Aorta (tissue), 5 donors: ENCODE measurements at regions of chr6 and their contacts with region 1.

Region 1: DNA sequence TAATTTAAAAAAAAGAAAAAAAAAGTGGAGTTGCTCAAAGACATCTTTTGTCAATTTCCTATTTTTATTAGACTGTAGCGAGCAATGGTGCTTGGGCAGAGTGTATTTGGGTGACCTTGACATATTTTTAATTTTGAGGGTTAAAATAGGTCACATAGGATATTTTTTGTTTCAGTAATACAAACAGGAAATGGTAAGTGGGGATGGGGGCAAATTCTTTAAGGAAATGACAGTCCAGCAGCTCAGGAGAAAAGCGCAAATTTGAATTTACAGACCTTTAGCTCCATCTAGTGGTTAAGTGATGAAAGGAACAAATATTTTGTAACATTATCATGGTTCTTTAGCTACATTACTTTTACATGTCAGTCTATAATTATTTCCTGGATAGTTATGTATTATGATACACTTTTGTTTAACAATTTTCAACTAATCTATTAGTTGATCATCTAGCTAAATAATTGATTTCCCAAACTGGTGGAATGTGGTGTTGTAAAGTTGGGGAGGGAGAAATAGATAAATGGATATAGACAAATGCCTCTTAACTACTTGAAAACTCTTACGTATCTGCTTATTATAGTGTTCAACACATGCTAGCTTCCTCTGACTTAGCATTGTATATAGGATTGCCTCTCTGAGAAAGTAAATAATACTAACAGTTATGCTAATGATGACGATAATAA is 10.0 kb downstream of the CITED2 start:
- DNase-seq: no peak
- ATAC-seq: peak; percentile 69
- H3K4me3 ChIP-seq: no peak overlapping the region
- H3K27ac ChIP-seq: no peak overlapping the region
- H3K4me1 ChIP-seq: peaks cover 0 to 3% of the 10 kb centered on the region in 2 donors
- H3K27me3 ChIP-seq: no peaks in the 10 kb centered on the region

Region 2: GRCh38 chr6:138817822-138818308 is 546.6 kb before region 1 on chr6:
- intact Hi-C with region 1: loop called (anchors 2 kb)
- DNase-seq: no peak
- ATAC-seq: no peak
- H3K4me3 ChIP-seq: no peak overlapping the region
- H3K27ac ChIP-seq: no peak overlapping the region
- H3K4me1 ChIP-seq: no peaks in the 10 kb centered on the region
- H3K27me3 ChIP-seq: no peaks in the 10 kb centered on the region

Region 3: GRCh38 chr6:139429580-139430145 is 65.2 kb after region 1 on chr6:
- intact Hi-C with region 1: no loop called
- DNase-seq: no peak
- ATAC-seq: no peak
- H3K4me3 ChIP-seq: no peak overlapping the region
- H3K27ac ChIP-seq: no peak overlapping the region
- H3K4me1 ChIP-seq: no peaks in the 10 kb centered on the region
- H3K27me3 ChIP-seq: no peaks in the 10 kb centered on the region

Region 4: GRCh38 chr6:139877828-139878408 is 513.5 kb after region 1 on chr6:
- intact Hi-C with region 1: no loop called
- DNase-seq: no peak
- ATAC-seq: peak; percentile 7
- H3K4me3 ChIP-seq: no peak overlapping the region
- H3K27ac ChIP-seq: no peak overlapping the region
- H3K4me1 ChIP-seq: peaks cover under 1 to 4% of the 10 kb centered on the region in 2 donors
- H3K27me3 ChIP-seq: no peaks in the 10 kb centered on the region